Activated CD4-positive, alpha-beta memory T cell treated with anti-CD3 and anti-CD28 coated beads, Interleukin-2, amount 10 ng/mL, durations not matched to agents 7 days and 5 days (primary cell): ENCODE measurements at regions of chr5 and their contacts with region 1.

Region 1: DNA sequence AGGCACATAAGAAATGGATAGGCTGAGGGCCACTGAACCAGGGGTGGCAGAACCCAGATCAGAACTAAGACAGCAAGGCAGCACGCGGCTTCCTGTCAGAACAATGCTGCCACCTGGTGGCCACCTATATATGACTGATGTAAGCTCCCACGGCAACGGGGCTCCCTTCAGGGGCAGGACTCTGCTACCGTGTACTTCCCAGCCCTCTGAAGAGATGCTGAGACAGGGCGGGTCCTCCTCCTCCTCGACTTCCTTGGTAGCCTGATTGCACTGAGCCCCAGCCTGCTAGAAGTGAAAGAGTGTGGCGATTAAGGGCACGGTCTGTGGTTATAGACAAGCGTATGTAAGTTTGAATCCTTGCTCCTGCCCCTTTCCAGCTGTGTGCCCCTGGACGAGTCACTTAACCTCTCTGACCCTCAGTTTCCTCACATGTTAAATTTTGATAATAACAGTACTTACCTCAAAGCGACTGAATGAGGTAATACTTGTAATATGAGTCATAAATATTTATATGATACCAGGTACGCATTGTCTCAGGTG is 13.3 kb downstream of the RPS14 start:
- DNase-seq: peak; percentile 91
- H3K4me3 Mint-ChIP-seq: peak overlapping the region; percentile 49
- H3K27ac Mint-ChIP-seq: peak overlapping the region; percentile 45
- H3K4me1 Mint-ChIP-seq: peaks cover 11% of the 10 kb centered on the region
- H3K27me3 Mint-ChIP-seq: no peaks in the 10 kb centered on the region

Region 2: GRCh38 chr5:149828161-149828884 is 607.9 kb before region 1 on chr5:
- CTCF ChIA-PET with region 1: no interaction called
- POLR2A ChIA-PET with region 1: no interaction called
- DNase-seq: peak; percentile 85
- H3K4me3 Mint-ChIP-seq: no peak overlapping the region
- H3K27ac Mint-ChIP-seq: no peak overlapping the region
- H3K4me1 Mint-ChIP-seq: peaks cover 9% of the 10 kb centered on the region
- H3K27me3 Mint-ChIP-seq: no peaks in the 10 kb centered on the region

Region 3: DNA sequence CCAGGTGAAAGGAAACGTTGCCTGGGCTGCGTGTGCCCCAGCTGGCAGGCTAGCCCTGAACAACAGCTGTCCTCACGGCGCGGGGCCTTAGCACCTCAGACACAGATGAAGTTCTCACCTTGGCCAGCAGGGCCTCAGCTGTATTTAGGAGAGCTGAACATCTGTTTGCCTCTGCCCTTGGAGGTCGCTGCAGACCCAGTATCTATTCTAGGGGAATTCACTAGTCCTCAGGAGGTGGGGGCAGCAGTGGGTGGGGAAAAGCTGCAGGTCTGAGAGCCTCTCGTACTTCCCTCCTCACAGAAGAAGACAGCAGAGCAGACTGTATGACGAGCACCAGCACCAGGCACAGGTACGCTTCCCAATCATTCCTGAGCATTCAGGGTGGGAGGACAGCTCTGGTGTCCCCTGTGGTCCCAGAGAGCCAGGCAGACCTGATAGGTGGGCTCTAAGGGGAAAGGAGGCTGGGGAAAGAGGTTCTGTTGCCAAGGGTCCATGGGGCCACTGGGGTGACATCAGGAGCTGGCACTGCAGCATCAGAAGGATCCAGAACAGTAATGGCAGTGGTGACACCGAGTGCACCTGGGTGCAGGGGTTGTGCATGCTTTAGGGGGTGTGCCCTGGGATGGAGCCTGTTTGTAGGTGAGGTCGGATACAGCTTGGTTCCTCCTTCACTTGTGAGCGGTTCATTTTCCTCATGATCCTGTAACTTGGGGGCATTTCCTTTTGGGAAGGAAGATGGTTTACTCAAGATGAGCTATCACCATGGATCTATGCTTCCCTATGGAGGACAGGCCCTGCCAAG is 37.3 kb before region 1 on chr5:
- CTCF ChIA-PET with region 1: interaction called, 29 read pairs
- POLR2A ChIA-PET with region 1: interaction called, 6 read pairs
- DNase-seq: no peak
- H3K4me3 Mint-ChIP-seq: no peak overlapping the region
- H3K27ac Mint-ChIP-seq: peak overlapping the region; percentile 32
- H3K4me1 Mint-ChIP-seq: no peaks in the 10 kb centered on the region
- H3K27me3 Mint-ChIP-seq: no peaks in the 10 kb centered on the region

Region 4: DNA sequence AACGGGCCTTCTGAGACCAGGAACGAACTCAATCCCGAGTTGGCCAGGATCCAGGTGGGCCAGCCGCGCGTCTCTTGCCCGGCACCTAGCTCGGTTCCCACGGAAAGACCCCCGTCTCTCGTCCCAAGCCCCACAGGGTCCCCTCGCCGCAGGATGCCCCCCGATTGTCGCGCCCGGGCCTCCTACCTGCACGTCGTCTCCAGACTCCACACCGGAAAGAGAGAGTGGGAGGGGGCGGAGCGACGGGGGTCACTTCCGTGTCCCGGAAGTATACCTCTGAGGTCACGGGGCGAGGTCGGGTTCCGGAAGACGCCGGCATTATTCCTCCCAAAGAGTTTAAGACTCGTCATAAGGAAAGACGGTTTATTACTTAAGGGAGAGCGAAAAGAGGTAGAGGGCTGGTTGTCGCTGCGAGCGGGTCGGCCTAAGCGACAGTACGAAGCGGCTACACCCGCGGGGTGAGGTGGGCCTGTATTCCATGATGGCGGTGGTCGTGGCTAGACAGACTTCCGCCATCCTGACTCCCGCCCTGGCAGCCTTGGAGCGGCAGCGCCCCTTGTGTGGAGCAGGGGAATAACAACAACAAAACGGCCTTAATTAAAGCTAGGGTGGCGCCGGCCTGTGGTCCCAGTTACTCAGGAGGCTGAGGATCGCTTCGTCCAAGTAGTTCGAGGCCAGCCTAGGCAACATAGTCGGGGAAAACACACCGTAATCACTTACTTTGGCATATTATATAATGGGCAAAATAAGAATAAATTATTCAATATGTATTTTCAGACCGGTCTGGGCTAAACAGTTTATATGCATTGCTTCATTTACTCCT is 13.5 kb after region 1 on chr5 and contains the start of gene RPS14:
- CTCF ChIA-PET with region 1: interaction called, 11 read pairs
- POLR2A ChIA-PET with region 1: interaction called, 12 read pairs
- DNase-seq: peak; percentile 95
- H3K4me3 Mint-ChIP-seq: peak within 1 kb of the TSS; percentile 82
- H3K27ac Mint-ChIP-seq: peak within 1 kb of the TSS; percentile 92
- H3K4me1 Mint-ChIP-seq: peaks cover 34% of the 10 kb centered on the region
- H3K27me3 Mint-ChIP-seq: no peaks in the 10 kb centered on the region
- total RNA-seq, gene RPS14: 2,316 to 2,367 TPM